Posterior vena cava (tissue), 2 donors: ENCODE measurements at regions of chr3 and their contacts with region 1.

Region 1: DNA sequence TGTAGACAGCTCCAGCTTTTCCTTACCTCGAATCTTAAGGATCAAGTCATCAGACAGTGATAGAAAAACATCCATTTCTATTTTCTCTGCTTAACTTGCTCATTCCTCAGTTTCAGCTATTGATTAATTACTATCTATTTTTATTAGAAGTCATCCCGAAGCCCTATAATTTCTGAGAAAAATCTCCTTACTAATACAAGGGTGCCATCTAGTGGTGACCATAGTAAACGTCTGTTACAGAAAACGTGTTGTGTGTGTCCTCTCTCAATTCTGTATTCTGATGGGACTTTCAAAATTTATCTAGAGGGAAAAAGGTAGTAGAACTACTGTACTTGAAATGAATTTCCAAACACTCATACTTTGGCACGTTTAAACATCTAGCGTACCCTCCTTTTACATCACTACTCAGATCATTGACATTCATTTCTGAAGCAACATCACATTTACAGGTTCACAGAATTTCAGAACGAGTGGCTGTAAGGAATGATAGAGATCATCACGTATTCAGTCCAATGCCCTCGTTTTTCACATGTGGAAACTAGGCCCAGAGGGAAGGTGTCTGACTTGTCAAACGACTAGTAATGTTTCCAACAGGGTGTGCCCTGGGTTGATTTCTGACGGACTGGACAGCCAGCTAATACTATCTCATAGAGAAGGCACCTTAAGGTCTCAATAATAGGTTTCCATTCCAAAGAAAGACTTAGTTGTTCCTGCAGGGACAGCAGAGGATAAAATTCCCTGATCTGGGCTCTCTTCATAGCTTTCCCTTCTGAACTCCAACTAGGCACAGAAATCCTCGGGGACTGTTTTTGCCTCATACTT is 25.6 kb downstream of the HACD2 start:
- DNase-seq: no peak

Region 2: DNA sequence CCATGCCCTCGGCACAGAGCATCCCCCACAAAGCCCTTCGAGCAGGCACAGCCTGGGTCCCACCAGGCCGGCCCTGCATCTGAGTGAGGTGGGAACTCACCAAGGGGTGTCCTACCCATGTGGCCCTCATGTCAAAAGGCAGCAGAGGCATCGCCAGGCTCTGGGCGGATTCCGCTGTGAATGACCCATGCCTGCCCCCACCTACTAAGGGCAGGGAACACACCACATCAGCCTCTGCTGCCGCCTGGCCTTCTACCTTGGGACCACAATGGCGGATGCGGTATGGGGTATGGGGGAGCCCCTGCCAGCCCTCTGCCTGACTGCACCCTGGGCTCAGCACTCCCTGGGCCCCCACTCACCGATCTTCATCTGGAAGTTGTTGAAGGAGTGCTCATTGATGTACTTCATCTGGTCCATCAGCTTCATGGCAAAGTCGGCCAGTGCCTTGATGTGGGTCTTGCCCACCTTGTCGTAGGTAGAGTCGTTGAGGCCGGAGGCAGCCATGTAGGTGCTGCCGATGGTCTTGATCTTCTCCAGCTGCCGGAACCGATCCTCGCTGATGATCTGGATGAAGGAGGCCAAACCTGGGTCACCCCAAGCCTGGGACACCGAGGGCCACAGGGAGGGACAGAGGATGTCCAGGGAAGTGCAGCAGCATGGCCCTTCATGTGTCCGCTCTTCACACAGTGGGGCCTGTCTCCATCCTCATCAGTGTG is 269.7 kb before region 1 on chr3:
- intact Hi-C with region 1: loop called in 1 of 2 experiments (anchors 2 kb)
- DNase-seq: peak; percentile 67

Region 3: DNA sequence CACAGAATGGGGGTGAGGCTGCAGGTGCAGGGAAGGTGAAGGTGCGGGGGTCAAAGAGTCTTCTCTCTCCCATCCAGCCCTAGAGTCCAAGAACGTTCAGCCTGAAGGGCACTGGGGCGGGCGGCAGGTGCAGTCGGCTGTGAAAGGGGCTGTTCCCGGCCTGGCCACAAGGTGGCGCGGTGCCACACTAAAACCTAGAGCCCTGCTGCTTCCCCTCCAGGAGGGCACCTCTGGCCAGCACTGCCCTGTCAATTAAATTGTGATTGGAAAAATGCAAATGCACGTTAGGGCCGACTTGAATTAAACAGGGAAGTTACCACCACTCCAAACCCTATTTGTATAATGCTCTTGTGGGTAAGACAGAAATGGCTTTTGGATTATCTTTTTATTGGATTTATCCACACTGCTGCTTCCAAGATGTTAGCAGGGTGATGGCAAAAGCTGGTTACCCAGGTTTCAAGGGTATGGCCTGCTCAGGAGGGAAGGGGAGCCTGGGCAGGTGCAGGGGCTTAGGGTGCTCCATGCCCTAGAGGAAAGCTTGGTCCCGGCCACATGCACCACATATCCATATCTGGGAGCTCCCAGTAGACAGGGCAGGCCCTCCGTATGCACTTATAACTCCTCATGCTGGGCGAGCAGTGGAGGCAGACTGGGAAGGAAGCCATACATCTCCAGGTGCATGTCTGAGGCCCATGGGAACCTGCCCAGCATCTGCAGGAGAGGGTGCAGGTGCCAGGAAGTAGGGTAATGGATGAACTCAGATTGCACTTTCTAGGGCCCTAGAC is 230.2 kb before region 1 on chr3:
- intact Hi-C with region 1: loop called in 1 of 2 experiments (anchors 10 kb)
- DNase-seq: peak; percentile 93

Region 4: GRCh38 chr3:123406598-123406997 is 152.7 kb before region 1 on chr3:
- intact Hi-C with region 1: no loop called
- DNase-seq: peak; percentile 79

Region 5: GRCh38 chr3:124429129-124429815 is 870.0 kb after region 1 on chr3:
- intact Hi-C with region 1: no loop called
- DNase-seq: no peak